Heart left ventricle (tissue), 16 donors: ENCODE measurements at regions of chr4 and their contacts with region 1.

Region 1: DNA sequence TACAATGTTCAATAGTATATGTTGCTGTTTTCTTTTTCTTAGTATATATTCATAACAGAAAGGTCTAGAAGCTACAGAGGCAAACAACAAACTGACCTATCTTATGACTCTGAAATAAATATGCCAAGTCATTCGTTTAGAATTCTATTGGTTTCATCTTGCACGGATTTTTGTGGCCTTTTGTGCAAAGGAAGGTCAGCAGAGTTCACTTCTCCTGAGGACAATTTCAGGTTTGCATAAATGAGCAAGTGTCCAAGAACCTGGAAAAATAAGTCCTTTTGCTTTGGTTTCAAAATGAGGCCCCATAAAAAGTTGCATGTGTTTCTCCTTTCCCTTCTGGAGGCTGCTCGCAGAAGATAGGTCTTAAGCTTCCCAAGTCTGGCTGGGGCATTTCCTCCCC is 156.9 kb downstream of the APBB2 start:
- DNase-seq: no peak
- ATAC-seq: no peak
- H3K4me3 ChIP-seq: no peak overlapping the region
- H3K27ac ChIP-seq: peak overlapping the region in 1 of 12 donors; percentile 8
- H3K4me1 ChIP-seq: peaks cover 0 to 33% (median 16%) of the 10 kb centered on the region in 12 donors
- H3K27me3 ChIP-seq: no peaks in the 10 kb centered on the region
- CTCF ChIP-seq: no peak
- POLR2A ChIP-seq: no peak

Region 2: DNA sequence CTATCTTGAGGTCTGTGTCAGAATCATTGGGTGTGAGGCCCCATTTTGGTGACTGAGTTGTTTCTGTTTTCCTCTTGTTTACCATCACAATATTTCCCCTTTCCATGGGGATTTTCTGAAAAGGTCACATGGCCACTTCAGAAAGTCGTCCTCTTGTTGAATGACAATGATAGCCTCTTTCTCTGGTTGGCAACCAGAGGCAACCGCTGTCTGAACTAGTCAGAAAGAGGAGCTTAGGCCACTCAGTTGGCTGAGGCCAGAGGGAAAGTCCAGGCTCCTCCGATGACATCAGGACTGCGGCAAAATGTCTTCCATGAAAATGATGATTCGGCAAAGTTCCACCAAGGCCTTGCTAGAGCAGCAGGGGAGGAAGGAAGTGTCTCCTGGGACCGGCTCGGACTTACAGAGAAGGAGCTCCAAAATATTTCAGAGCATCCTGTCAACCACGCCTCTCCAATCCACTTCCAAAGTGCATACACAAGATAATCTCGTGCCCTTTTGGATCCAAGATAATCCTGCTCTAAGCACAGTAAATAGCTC is 408.7 kb before region 1 on chr4:
- intact Hi-C with region 1: no loop called
- DNase-seq: peak in 4 of 5 donors; percentile 25 to 41 (median 30)
- ATAC-seq: peak in 3 of 4 donors; percentile 54 to 69 (median 61)
- H3K4me3 ChIP-seq: no peak overlapping the region
- H3K27ac ChIP-seq: peak overlapping the region in 1 of 12 donors; percentile 83
- H3K4me1 ChIP-seq: peaks cover 0 to 25% (median 0%) of the 10 kb centered on the region in 12 donors
- H3K27me3 ChIP-seq: no peaks in the 10 kb centered on the region
- CTCF ChIP-seq: no peak
- POLR2A ChIP-seq: no peak

Region 3: GRCh38 chr4:41009411-41009810 is 48.1 kb before region 1 on chr4:
- intact Hi-C with region 1: no loop called
- DNase-seq: no peak
- ATAC-seq: peak in 1 of 4 donors; percentile 45
- H3K4me3 ChIP-seq: no peak overlapping the region
- H3K27ac ChIP-seq: no peak overlapping the region
- H3K4me1 ChIP-seq: peaks cover 0 to 15% (median 3%) of the 10 kb centered on the region in 12 donors
- H3K27me3 ChIP-seq: no peaks in the 10 kb centered on the region
- CTCF ChIP-seq: no peak
- POLR2A ChIP-seq: no peak

Region 4: DNA sequence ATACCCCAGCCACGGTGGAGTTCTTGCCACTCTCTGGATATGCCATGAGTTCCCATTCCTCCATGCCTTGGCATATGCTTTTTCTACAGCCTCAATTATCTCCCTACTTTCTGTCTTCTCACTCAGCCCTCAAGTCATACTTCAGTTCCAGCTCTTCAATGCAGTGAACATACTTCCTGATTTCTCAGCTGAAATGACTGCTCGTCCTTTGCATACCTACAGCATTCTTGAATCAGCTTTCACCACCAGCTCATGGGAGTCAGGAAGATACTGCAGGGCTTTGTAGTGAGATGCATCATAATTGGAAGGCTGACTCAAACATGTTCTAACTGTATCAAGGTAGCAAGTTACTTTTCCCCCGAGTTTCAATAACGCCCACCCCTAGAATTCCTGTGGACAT is 38.5 kb after region 1 on chr4:
- intact Hi-C with region 1: loop called in 3 of 10 experiments (anchors 5 to 10 kb)
- DNase-seq: no peak
- ATAC-seq: no peak
- H3K4me3 ChIP-seq: no peak overlapping the region
- H3K27ac ChIP-seq: no peak overlapping the region
- H3K4me1 ChIP-seq: peaks cover 0 to 65% (median 7%) of the 10 kb centered on the region in 12 donors
- H3K27me3 ChIP-seq: no peaks in the 10 kb centered on the region
- CTCF ChIP-seq: no peak
- POLR2A ChIP-seq: no peak

Region 5: GRCh38 chr4:41102414-41103092 is 45.1 kb after region 1 on chr4:
- intact Hi-C with region 1: loop called in 2 of 10 experiments (anchors 5 to 10 kb)
- DNase-seq: no peak
- ATAC-seq: no peak
- H3K4me3 ChIP-seq: no peak overlapping the region
- H3K27ac ChIP-seq: no peak overlapping the region
- H3K4me1 ChIP-seq: peaks cover 0 to 70% (median 9%) of the 10 kb centered on the region in 12 donors
- H3K27me3 ChIP-seq: no peaks in the 10 kb centered on the region
- CTCF ChIP-seq: no peak
- POLR2A ChIP-seq: no peak